ENCODE measurements at regions of chr14 and their contacts with region 1.

Region 1: DNA sequence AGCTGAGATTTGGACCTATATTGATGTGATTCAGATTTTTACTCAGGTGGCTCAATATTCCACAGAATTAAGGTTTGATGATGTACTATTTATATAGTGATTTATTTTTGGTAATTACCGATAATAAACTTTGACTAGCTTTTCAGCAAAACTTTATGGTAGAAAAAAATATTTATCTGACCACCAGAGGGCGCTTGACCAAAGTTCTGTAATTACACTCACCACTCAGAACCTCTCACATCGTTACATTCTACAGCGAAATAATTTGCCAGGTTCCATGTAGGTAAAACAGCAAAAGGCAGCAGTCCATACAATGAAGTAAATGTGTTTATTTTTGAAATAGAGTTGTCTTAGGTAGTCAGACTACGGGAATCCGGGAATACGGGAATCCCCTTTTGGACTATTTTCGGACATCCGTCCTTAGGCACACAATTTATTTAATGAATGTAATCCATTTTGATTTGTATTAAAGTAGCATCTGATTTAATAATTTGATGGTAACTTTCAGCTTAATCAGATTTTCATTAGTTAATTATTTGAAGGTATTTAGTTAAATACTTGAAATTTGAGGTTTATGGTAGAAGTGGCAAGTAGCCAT is 143.0 kb upstream of the DDHD1 start:
- DNase-seq: peak; percentile 8
- H3K4me3 ChIP-seq: no peak overlapping the region; a peak in 1 of 4 replicates
- H3K27ac ChIP-seq: no peak overlapping the region
- H3K4me1 ChIP-seq: no peaks in the 10 kb centered on the region
- H3K27me3 ChIP-seq: no peaks in the 10 kb centered on the region
- CTCF ChIP-seq: peak; percentile 80
- EP300 ChIP-seq: no peak
- RAD21 ChIP-seq: peak; percentile 51

Region 2: DNA sequence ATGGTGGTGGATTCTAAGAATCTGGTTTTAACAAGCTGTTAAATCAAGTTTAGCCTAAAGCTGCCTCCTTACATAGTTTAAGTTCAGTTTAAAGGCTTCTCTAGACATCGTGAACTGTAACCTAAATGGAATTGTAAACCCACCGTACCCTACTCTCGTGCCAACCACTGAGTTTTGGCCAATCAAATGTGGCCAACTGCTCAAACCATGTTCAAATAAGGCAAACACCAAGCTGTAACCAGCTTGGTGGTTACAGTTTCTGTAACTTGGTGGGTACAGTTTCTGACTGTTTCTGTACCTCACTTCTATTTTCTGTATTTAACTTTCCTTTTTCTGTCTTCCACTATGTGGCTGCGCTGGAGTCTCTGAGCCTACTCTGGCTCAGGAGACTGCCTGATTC is 11.0 kb before region 1 on chr14:
- CTCF ChIA-PET with region 1: interaction called, 12 read pairs
- POLR2A ChIA-PET with region 1: no interaction called
- DNase-seq: no peak
- H3K4me3 ChIP-seq: no peak overlapping the region
- H3K27ac ChIP-seq: no peak overlapping the region
- H3K4me1 ChIP-seq: no peaks in the 10 kb centered on the region
- H3K27me3 ChIP-seq: no peaks in the 10 kb centered on the region
- CTCF ChIP-seq: no peak
- EP300 ChIP-seq: no peak
- RAD21 ChIP-seq: no peak

Region 3: DNA sequence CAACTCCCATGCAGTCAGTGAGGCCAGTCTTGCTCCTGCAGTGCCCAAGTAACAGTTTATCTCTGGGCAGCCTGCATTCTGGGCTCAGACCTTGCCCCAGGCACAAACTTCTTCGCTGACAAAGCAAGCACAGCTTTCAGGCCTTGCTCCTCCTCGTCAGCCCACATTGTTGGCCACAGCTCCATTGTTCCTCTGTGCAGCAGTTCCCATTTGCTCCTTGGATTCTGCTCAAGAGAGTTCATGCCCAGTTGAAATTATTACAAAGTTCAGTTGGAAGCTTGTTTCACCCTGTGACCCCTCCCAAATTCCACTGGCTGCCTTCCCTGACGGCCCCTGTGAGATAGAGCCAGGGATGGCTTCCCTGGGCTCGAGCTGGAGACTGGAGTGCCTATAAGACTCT is 20.4 kb after region 1 on chr14:
- CTCF ChIA-PET with region 1: interaction called, 10 read pairs
- POLR2A ChIA-PET with region 1: no interaction called
- DNase-seq: no peak
- H3K4me3 ChIP-seq: no peak overlapping the region
- H3K27ac ChIP-seq: no peak overlapping the region
- H3K4me1 ChIP-seq: no peaks in the 10 kb centered on the region
- H3K27me3 ChIP-seq: no peaks in the 10 kb centered on the region
- CTCF ChIP-seq: no peak
- EP300 ChIP-seq: no peak
- RAD21 ChIP-seq: no peak

Region 4: GRCh38 chr14:53338192-53338591 is 42.1 kb after region 1 on chr14:
- CTCF ChIA-PET with region 1: interaction called, 10 read pairs
- POLR2A ChIA-PET with region 1: no interaction called
- DNase-seq: no peak
- H3K4me3 ChIP-seq: no peak overlapping the region
- H3K27ac ChIP-seq: no peak overlapping the region
- H3K4me1 ChIP-seq: no peaks in the 10 kb centered on the region
- H3K27me3 ChIP-seq: no peaks in the 10 kb centered on the region
- CTCF ChIP-seq: no peak
- EP300 ChIP-seq: no peak
- RAD21 ChIP-seq: no peak

Measured in SK-N-SH (cell line).